ENCODE measurements at regions of chr9 and their contacts with region 1.

Region 1: DNA sequence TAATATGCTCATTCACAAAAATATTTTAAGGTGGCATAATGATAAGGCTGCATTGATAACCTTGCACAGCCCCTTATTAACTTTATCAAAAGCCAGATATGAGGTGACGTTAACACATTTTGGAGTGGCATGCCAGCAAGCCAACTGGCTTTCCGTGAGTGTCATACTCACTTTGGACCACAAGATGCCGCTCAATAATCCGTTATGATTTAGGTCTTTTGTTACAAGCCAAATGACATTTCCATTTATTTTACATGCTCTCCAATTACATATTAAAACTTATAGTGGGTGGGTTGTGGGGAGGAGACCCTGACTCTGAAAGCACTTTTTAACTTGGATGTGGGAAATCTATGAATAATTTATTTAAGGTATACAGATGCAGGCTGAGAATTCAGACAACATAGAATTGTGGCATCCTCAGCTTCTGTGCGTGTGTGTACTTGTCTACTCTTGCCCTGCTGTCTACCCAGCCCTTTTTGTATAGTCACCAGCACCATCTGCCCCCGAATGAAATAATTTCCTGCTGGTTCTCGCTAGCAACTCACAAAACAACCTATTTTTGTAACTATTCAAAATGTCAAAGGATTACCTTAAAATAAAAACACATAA is 305.1 kb downstream of the PSAT1 start:
- DNase-seq: peak in 1 of 2 experiments; percentile 29
- H3K4me3 ChIP-seq: no peak overlapping the region
- H3K27ac ChIP-seq: no peak overlapping the region
- H3K4me1 ChIP-seq: no peaks in the 10 kb centered on the region
- H3K27me3 ChIP-seq: peaks cover 29% of the 10 kb centered on the region
- CTCF ChIP-seq: peak; percentile 78

Region 2: DNA sequence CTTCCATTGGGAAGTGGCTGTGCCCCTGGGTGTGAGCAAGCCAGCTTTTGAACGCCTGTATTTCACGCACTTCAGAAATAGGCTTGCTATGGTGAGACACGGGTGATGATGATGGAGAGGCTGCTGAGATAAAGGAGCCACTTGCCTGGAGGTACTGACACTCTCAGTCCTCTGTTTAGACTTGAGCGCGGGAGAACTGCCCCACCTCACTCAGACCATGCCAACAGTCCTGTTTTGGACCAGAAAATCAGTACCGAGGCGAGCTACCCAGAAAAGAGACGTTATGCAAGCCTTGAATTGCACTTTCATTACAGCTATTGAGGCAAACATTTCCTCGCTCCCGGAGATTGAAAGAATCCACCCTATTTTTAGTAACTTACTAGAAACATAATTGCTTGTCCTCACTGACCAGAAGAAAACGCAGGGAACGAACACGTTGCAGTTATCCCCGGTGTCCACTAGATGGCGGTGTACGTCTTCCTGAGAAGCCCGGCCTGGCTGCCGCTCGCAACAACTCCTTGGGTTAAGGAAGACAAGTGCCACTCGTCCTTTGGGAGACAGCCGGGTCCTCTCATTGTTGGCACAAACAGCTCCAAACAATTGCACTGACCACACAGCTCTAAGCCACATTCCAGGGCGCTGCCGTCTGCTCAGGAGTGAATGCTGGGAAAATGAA is 162.7 kb before region 1 on chr9:
- CTCF ChIA-PET with region 1: no interaction called
- POLR2A ChIA-PET with region 1: no interaction called
- intact Hi-C with region 1: loop called (anchors 5 kb)
- DNase-seq: peak; percentile 66 to 77
- H3K4me3 ChIP-seq: no peak overlapping the region
- H3K27ac ChIP-seq: no peak overlapping the region
- H3K4me1 ChIP-seq: no peaks in the 10 kb centered on the region
- H3K27me3 ChIP-seq: peaks cover 74% of the 10 kb centered on the region
- CTCF ChIP-seq: peak; percentile 93

Region 3: DNA sequence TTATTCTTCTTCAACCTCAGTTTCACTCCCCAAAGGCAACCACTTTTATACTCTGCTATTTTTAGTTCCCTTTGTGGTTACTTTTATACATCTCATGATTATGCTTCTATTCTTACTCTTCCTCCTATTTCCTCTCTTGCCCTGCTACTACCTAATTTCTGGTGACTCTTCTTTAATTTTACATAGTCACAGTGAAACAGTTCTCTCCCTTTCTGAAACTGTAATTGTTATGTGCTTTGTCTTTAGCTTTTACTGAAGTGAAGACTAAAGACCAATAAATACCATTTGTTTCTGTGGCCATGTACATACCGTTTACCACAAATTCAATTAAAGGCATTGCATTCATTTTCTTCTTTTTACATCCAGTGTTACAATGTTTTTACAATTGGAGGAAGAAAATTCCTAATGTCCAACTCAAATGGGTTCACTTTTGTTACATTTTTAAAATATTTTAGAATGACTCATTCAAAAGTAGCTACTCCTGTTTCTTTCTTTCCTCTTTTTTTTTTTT is 105.5 kb after region 1 on chr9:
- CTCF ChIA-PET with region 1: no interaction called
- POLR2A ChIA-PET with region 1: no interaction called
- intact Hi-C with region 1: loop called (anchors 10 kb)
- DNase-seq: no peak
- H3K4me3 ChIP-seq: no peak overlapping the region
- H3K27ac ChIP-seq: no peak overlapping the region
- H3K4me1 ChIP-seq: 0 out of 2 replicates have a peak, but pooled peaks cover 5% of the 10 kb centered on the region
- H3K27me3 ChIP-seq: peaks cover 7% of the 10 kb centered on the region; the same call in 1 of the 2 replicates
- CTCF ChIP-seq: no peak

Region 4: GRCh38 chr9:79116041-79116440 is 514.0 kb after region 1 on chr9:
- CTCF ChIA-PET with region 1: no interaction called
- POLR2A ChIA-PET with region 1: no interaction called
- intact Hi-C with region 1: loop called (anchors 5 kb)
- DNase-seq: no peak
- H3K4me3 ChIP-seq: no peak overlapping the region
- H3K27ac ChIP-seq: no peak overlapping the region
- H3K4me1 ChIP-seq: no peaks in the 10 kb centered on the region
- H3K27me3 ChIP-seq: no peaks in the 10 kb centered on the region
- CTCF ChIP-seq: no peak

Region 5: GRCh38 chr9:79233542-79233941 is 631.5 kb after region 1 on chr9:
- CTCF ChIA-PET with region 1: no interaction called
- POLR2A ChIA-PET with region 1: no interaction called
- intact Hi-C with region 1: loop called (anchors 2 kb)
- DNase-seq: peak in 1 of 2 experiments; percentile 43
- H3K4me3 ChIP-seq: no peak overlapping the region
- H3K27ac ChIP-seq: no peak overlapping the region
- H3K4me1 ChIP-seq: no peaks in the 10 kb centered on the region
- H3K27me3 ChIP-seq: no peaks in the 10 kb centered on the region
- CTCF ChIP-seq: peak; percentile 49; the same call in 1 of the 2 replicates